ENCODE measurements at regions of chr2 and their contacts with region 1.

Region 1: DNA sequence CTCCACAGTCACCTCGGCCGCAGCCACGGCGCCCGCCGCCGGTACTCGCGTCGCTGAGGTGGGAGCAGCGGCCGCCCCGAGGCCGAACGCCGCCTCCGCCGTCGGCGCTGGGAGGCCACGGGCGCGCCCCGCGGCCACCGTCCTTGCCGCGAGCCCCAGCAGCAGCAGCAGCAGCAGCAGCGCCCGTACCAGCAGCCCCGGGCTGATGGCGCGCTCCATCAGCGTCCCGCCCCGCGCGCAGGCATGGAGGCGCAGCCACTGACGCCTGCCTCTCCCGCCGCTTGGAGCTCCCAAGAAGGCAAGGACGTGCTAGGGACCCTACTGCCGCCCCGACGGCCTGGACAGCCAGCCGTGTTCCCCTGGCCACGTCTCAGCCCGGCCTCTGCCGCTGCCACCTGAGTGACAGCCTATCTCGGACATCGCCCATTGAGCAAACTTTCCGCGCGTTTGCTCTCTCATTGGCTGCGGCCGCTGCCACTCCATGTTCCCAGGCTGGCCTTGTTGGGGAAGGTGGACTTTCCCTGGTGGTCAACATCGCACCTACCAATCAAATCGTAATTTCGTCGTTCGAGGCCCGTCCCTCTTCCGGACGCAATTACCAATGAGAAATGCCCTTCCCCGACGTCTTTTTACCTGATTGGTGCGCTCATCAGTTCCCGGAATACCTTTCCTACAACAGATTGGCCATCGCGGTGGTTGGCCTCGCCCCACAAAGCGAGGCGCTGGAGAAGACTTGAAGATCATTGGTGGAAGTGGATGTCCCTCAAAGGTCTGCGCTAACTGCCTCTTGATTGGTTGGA is at the start of gene EIF2AK3:
- DNase-seq: peak; percentile 85 to 100 (median 94)
- ATAC-seq: peak; percentile 82
- H3K4me3 ChIP-seq: peak within 1 kb of the TSS; percentile 70 to 74
- H3K4me3 Mint-ChIP-seq: no peak within 1 kb of the TSS
- H3K27ac ChIP-seq: peak within 1 kb of the TSS; percentile 92 to 97
- H3K27ac Mint-ChIP-seq: peak within 1 kb of the TSS; percentile 96
- H3K4me1 ChIP-seq: peaks cover 27% of the 10 kb centered on the region
- H3K4me1 Mint-ChIP-seq: peaks cover 12% of the 10 kb centered on the region
- H3K27me3 ChIP-seq: no peaks in the 10 kb centered on the region
- H3K27me3 Mint-ChIP-seq: no peaks in the 10 kb centered on the region
- CTCF ChIP-seq: no peak
- total RNA-seq, gene EIF2AK3: 44.8 to 51.6 TPM

Region 2: DNA sequence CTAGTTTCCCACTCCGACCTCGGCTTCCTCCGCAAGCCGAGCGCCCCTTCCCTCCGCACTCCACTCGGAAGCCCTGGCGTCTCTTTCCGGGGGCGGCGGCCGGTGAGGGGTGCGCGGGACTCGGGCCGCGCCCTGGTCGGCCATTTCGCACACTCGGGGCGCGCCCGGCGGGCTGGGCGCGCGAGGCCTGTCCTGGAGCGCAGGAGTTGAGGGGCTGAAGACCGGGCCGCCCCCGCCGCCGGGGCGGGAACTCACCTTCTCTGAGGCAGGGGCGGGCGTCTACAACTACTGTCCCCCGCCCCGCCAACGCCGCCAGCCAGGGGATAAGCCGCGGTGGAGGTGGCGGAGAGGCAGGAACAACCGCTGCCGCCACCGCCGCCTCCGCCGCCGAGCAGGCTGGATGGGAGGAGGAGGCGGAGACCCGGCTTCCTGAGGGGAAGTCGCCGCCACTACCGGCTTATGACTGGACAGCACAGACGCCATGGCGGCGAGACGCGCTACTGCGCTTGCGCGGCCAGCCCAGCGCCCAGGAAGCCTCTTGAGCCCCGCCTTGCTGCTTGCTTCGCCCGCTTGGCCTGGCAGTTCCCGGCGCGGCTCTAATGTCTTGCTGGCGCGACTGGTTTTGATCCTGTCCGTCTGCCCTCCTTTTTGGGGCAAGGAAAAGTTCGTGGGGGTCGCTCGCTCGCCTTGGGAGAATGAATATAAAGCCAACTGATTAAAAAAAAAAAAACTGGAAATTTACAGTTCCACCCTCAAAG is 571.7 kb before region 1 on chr2 and contains the start of gene KRCC1:
- CTCF ChIA-PET with region 1: no interaction called
- POLR2A ChIA-PET with region 1: interaction called, 3 read pairs
- intact Hi-C with region 1: loop called in 1 of 2 experiments (anchors 2 kb)
- DNase-seq: peak; percentile 86 to 98 (median 94)
- ATAC-seq: peak; percentile 91
- H3K4me3 ChIP-seq: peak within 1 kb of the TSS; percentile 57 to 84
- H3K4me3 Mint-ChIP-seq: peak within 1 kb of the TSS; percentile 96
- H3K27ac ChIP-seq: peak within 1 kb of the TSS; percentile 80 to 90
- H3K27ac Mint-ChIP-seq: peak within 1 kb of the TSS; percentile 98
- H3K4me1 ChIP-seq: peaks cover 23% of the 10 kb centered on the region
- H3K4me1 Mint-ChIP-seq: peaks cover 54% of the 10 kb centered on the region
- H3K27me3 ChIP-seq: no peaks in the 10 kb centered on the region
- H3K27me3 Mint-ChIP-seq: no peaks in the 10 kb centered on the region
- CTCF ChIP-seq: no peak
- total RNA-seq, gene KRCC1: 3.1 to 3.6 TPM

Region 3: GRCh38 chr2:88590998-88591613 is 36.1 kb before region 1 on chr2:
- CTCF ChIA-PET with region 1: no interaction called
- POLR2A ChIA-PET with region 1: no interaction called
- intact Hi-C with region 1: loop called (anchors 1 to 5 kb)
- DNase-seq: peak in 7 of 9 experiments; percentile 5 to 73 (median 38)
- ATAC-seq: peak; percentile 90
- H3K4me3 ChIP-seq: no peak overlapping the region
- H3K4me3 Mint-ChIP-seq: no peak overlapping the region
- H3K27ac ChIP-seq: no peak overlapping the region
- H3K27ac Mint-ChIP-seq: no peak overlapping the region
- H3K4me1 ChIP-seq: no peaks in the 10 kb centered on the region
- H3K4me1 Mint-ChIP-seq: peaks cover 4% of the 10 kb centered on the region
- H3K27me3 ChIP-seq: no peaks in the 10 kb centered on the region
- H3K27me3 Mint-ChIP-seq: no peaks in the 10 kb centered on the region
- CTCF ChIP-seq: peak; percentile 73

Region 4: GRCh38 chr2:88600038-88600465 is 27.2 kb before region 1 on chr2:
- CTCF ChIA-PET with region 1: no interaction called
- POLR2A ChIA-PET with region 1: interaction called, 4 read pairs
- intact Hi-C with region 1: loop called (anchors 1 to 2 kb)
- DNase-seq: peak in 7 of 9 experiments; percentile 1 to 87 (median 29)
- ATAC-seq: peak; percentile 98
- H3K4me3 ChIP-seq: no peak overlapping the region
- H3K4me3 Mint-ChIP-seq: no peak overlapping the region
- H3K27ac ChIP-seq: no peak overlapping the region
- H3K27ac Mint-ChIP-seq: peak overlapping the region; percentile 15
- H3K4me1 ChIP-seq: no peaks in the 10 kb centered on the region
- H3K4me1 Mint-ChIP-seq: peaks cover 45% of the 10 kb centered on the region
- H3K27me3 ChIP-seq: no peaks in the 10 kb centered on the region
- H3K27me3 Mint-ChIP-seq: no peaks in the 10 kb centered on the region
- CTCF ChIP-seq: no peak

Region 5: GRCh38 chr2:88669371-88670214 is 42.3 kb after region 1 on chr2:
- CTCF ChIA-PET with region 1: interaction called, 9 read pairs
- POLR2A ChIA-PET with region 1: interaction called, 5 read pairs
- intact Hi-C with region 1: loop called (anchors 5 kb)
- DNase-seq: peak in 4 of 9 experiments; percentile 12 to 63 (median 34)
- ATAC-seq: peak; percentile 75
- H3K4me3 ChIP-seq: no peak overlapping the region
- H3K4me3 Mint-ChIP-seq: no peak overlapping the region
- H3K27ac ChIP-seq: no peak overlapping the region
- H3K27ac Mint-ChIP-seq: no peak overlapping the region
- H3K4me1 ChIP-seq: no peaks in the 10 kb centered on the region
- H3K4me1 Mint-ChIP-seq: no peaks in the 10 kb centered on the region
- H3K27me3 ChIP-seq: no peaks in the 10 kb centered on the region
- H3K27me3 Mint-ChIP-seq: no peaks in the 10 kb centered on the region
- CTCF ChIP-seq: peak; percentile 40

Region 6: DNA sequence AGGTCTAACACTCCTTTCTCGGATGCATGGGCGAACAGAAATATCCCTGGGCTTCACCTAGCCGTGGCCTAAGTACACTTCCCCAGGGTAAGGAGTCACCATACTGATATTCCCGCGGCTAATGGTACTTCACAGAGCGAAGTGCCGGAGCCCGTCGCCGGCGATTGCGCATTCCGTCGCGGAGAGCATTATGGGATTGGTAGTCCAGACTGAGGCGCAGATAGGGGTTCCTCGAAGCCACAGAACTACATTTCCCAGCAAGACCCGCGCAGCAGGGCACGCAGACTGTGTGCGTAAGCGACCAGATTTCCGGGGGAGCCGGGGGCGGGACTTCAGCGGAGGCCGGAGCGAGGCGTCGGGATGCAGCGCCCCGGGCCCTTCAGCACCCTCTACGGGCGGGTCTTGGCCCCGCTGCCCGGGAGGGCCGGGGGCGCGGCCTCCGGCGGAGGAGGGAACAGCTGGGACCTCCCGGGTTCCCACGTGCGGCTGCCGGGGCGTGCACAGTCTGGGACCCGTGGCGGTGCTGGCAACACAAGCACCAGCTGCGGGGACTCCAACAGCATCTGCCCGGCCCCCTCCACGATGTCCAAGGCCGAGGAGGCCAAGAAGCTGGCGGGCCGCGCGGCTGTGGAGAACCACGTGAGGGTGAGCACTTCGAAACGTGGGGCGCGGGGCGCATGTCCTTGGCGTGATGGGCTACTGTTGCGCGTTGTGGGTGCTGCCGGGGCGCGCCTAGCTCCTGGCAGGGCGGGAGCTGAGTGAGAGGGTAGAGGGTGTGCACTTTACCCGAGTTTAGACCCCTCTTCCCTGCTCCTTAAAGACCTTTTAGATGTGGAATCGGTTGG is 64.3 kb after region 1 on chr2 and contains the start of gene RPIA:
- CTCF ChIA-PET with region 1: interaction called, 3 read pairs
- POLR2A ChIA-PET with region 1: interaction called, 8 read pairs
- intact Hi-C with region 1: loop called (anchors 1 kb)
- DNase-seq: peak; percentile 97 to 100 (median 99)
- ATAC-seq: peak; percentile 94
- H3K4me3 ChIP-seq: peak within 1 kb of the TSS; percentile 69 to 78
- H3K4me3 Mint-ChIP-seq: peak within 1 kb of the TSS; percentile 91
- H3K27ac ChIP-seq: peak within 1 kb of the TSS; percentile 66 to 80
- H3K27ac Mint-ChIP-seq: peak within 1 kb of the TSS; percentile 92
- H3K4me1 ChIP-seq: peaks cover 25% of the 10 kb centered on the region
- H3K4me1 Mint-ChIP-seq: peaks cover 63% of the 10 kb centered on the region
- H3K27me3 ChIP-seq: no peaks in the 10 kb centered on the region
- H3K27me3 Mint-ChIP-seq: no peaks in the 10 kb centered on the region
- CTCF ChIP-seq: peak; percentile 55
- total RNA-seq, gene RPIA: 26.5 to 27.5 TPM